Left ventricle myocardium superior (tissue), 1 donor: ENCODE measurements at regions of chr5 and their contacts with region 1.

Region 1: DNA sequence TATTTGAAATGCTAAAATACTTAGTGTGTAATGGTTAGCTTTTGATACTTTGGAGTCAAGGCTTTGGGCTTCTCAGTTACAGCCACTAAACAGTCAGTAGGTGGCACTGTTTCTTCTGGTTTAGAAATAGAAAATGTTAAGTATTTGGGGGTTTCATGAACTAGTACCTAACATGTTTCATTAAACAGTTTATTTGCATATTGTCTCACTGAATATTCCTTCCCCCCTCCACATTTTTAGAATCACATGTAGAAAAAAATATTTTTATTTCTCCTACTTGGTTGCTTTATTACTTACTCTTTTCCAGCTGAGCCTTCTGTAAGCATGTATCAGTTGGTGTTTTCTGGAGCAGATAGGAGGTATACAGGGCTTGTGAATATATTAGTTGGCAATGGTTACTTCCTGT is 48.0 kb downstream of the IPO11 start:
- DNase-seq: no peak
- ATAC-seq: no peak

Region 2: GRCh38 chr5:62494772-62495171 is 34.2 kb after region 1 on chr5:
- intact Hi-C with region 1: no loop called
- DNase-seq: no peak
- ATAC-seq: no peak

Region 3: DNA sequence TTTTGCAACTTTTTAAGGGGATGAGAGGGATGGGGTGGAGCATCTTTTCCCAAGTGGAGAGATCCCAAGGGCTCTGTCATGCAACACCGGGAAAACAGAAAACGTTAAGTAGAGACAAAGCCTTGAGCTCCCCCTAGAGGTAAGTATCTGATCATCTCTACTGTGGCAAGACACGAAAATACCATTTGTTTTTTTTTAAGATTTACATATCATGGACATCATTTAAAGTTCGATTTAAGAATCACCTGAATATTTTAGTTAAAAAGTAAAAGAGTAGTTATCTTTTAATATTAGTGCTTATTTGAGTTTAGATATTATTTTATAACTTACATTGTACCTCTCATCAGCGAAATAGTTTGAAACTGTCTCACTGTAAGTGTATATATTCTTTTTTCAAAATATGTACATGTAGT is 318.4 kb after region 1 on chr5:
- intact Hi-C with region 1: loop called (anchors 10 kb)
- DNase-seq: no peak
- ATAC-seq: peak; percentile 81